ENCODE measurements at regions of chr4 and their contacts with region 1.

Region 1: GRCh38 chr4:61200187-61200915 is at the start of gene ADGRL3:
- DNase-seq: peak; percentile 56
- H3K4me3 ChIP-seq: peak within 1 kb of the TSS; percentile 58 to 76 (median 63)
- H3K27ac ChIP-seq: no peak within 1 kb of the TSS
- H3K4me1 ChIP-seq: peaks cover 21% of the 10 kb centered on the region
- H3K27me3 ChIP-seq: peaks cover 29% of the 10 kb centered on the region
- CTCF ChIP-seq: no peak
- total RNA-seq, gene ADGRL3: 2.8 TPM in 1 of 2 donors, not detected in the other

Region 2: DNA sequence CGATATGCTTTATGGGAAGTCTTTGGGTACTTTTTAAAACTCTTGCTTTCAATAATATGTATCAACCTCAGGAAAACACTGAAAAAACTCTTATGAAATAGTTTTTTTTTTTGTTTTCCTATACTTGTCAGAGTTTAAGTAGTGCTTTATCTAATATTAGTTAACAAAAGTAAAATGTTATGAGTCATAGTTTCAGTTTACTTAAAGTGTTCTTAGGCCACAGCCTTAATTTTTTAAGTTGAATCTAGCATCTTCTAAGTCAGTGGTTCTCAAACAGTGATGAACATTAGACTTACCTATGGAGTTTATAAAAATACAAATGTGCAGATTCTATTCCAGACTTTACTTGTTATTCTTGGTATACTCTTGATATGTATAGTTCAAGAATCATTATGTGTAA is 26.6 kb before region 1 on chr4:
- CTCF ChIA-PET with region 1: interaction called, 11 read pairs
- dilution Hi-C with region 1: no loop called
- in situ Hi-C with region 1: no loop called
- intact Hi-C with region 1: no loop called
- DNase-seq: no peak
- H3K4me3 ChIP-seq: no peak overlapping the region
- H3K27ac ChIP-seq: no peak overlapping the region
- H3K4me1 ChIP-seq: no peaks in the 10 kb centered on the region
- H3K27me3 ChIP-seq: no peaks in the 10 kb centered on the region
- CTCF ChIP-seq: no peak

Region 3: DNA sequence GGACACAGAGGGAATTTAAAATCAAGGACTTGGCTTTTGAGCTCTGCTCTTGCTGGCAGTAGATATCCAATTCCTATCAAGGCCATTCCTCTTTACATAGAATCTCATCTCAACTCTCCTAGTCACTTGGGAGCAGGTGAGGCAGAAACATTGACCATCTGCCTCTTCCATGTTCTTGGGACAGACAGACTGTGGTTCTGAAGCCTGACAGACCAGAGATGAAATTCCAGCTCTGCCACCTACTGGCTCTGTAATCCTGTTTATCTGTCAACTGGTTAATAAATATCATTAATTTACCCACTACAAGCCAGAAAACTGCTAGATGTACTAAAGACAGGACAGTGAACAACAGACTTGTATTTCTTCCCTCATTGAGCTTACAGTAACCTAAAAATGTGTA is 300.5 kb after region 1 on chr4:
- CTCF ChIA-PET with region 1: interaction called, 3 read pairs
- dilution Hi-C with region 1: no loop called
- in situ Hi-C with region 1: no loop called
- intact Hi-C with region 1: loop called (anchors 2 kb)
- DNase-seq: peak; percentile 34
- H3K4me3 ChIP-seq: no peak overlapping the region
- H3K27ac ChIP-seq: no peak overlapping the region
- H3K4me1 ChIP-seq: no peaks in the 10 kb centered on the region
- H3K27me3 ChIP-seq: no peaks in the 10 kb centered on the region
- CTCF ChIP-seq: peak; percentile 23 to 55